ENCODE measurements at regions of chr1 and their contacts with region 1.

Region 1: GRCh38 chr1:65148548-65149350 is 746 bp downstream of the AK4 start:
- DNase-seq: peak; percentile 42 to 58
- ATAC-seq: peak; percentile 53 to 70 (median 62)
- H3K4me3 ChIP-seq: peak overlapping the region; percentile 83
- H3K27ac ChIP-seq: peak overlapping the region; percentile 50
- H3K4me1 ChIP-seq: peaks cover 4% of the 10 kb centered on the region
- H3K27me3 ChIP-seq: peaks cover 0 to 13% (median 3%) of the 10 kb centered on the region in 3 donors
- CTCF ChIP-seq: no peak

Region 2: GRCh38 chr1:64072089-64072793 is 1076.5 kb before region 1 on chr1:
- intact Hi-C with region 1: no loop called
- DNase-seq: no peak
- ATAC-seq: peak in 2 of 4 donors; percentile 34 to 48
- H3K4me3 ChIP-seq: no peak overlapping the region
- H3K27ac ChIP-seq: no peak overlapping the region
- H3K4me1 ChIP-seq: peaks cover 28% of the 10 kb centered on the region
- H3K27me3 ChIP-seq: no peaks in the 10 kb centered on the region
- CTCF ChIP-seq: no peak

Region 3: GRCh38 chr1:65209005-65209885 is 60.5 kb after region 1 on chr1:
- intact Hi-C with region 1: loop called in 1 of 2 experiments (anchors 10 kb)
- DNase-seq: no peak
- ATAC-seq: peak; percentile 28 to 68 (median 40)
- H3K4me3 ChIP-seq: no peak overlapping the region
- H3K27ac ChIP-seq: no peak overlapping the region
- H3K4me1 ChIP-seq: no peaks in the 10 kb centered on the region
- H3K27me3 ChIP-seq: no peaks in the 10 kb centered on the region
- CTCF ChIP-seq: peak; percentile 56

Measured in psoas muscle (tissue), 8 donors.